ENCODE measurements at regions of chr14 and their contacts with region 1.

Region 1: GRCh38 chr14:95113476-95113875 is 43.9 kb downstream of the DICER1 start:
- DNase-seq: no peak
- H3K4me3 ChIP-seq: no peak overlapping the region
- H3K27ac ChIP-seq: no peak overlapping the region
- H3K4me1 ChIP-seq: peaks cover 0 to under 1% of the 10 kb centered on the region in 2 donors
- H3K27me3 ChIP-seq: no peaks in the 10 kb centered on the region
- CTCF ChIP-seq: no peak
- POLR2A ChIP-seq: no peak

Region 2: GRCh38 chr14:94998670-94999072 is 114.8 kb before region 1 on chr14:
- intact Hi-C with region 1: no loop called
- DNase-seq: peak in 2 of 7 donors; percentile 19 to 26
- H3K4me3 ChIP-seq: no peak overlapping the region
- H3K27ac ChIP-seq: no peak overlapping the region
- H3K4me1 ChIP-seq: no peaks in the 10 kb centered on the region
- H3K27me3 ChIP-seq: no peaks in the 10 kb centered on the region
- CTCF ChIP-seq: no peak
- POLR2A ChIP-seq: no peak

Region 3: DNA sequence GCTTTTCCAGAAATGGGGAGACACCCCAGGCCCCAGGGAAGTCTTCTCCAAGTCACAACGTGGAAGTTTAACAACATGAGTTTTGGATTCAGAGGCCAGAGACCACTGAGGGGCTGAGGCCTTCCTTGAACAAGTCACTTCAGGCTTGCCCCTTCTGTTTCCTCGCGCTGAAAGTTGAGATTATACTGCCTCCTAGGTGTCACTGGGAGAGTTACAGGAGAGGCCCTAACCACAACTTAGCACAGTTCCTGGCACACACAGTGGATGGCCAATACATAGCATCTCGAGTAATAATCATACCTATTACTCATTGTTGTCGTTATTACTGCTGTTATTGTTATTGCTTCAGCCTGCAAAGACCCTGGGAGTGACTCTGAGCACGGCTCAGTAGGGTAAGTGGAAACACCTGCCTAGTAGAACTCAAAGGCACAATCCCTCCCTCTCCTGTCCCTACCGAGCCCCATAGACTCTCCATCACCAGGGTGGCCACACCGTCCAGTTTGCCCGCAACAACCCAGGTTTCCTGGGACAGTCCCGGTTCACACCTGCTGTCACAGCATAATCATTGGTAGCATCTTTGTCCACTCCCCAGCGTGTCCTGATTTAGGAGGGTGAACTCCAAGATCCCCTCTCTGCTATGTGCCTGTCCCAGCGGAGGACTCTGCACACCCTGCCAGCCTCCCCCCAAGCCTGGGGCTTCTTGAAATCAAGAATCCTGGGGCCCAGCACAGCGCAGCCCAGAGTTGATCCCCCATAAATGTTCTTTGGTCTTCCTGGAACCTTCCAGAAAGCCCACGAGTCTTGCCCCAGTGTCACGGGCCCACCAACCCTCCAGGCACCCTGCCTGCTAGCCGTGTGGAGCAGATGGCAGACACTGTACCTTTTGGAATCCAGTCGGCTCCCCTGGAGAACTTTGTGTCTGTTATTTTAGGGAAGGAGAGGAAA is 318.0 kb after region 1 on chr14:
- intact Hi-C with region 1: loop called in 1 of 2 experiments (anchors 5 kb)
- DNase-seq: no peak
- H3K4me3 ChIP-seq: no peak overlapping the region
- H3K27ac ChIP-seq: no peak overlapping the region
- H3K4me1 ChIP-seq: peaks cover 0 to 6% of the 10 kb centered on the region in 2 donors
- H3K27me3 ChIP-seq: no peaks in the 10 kb centered on the region
- CTCF ChIP-seq: peak in 3 of 6 experiments; percentile 42 to 43 (median 43)
- POLR2A ChIP-seq: no peak

Region 4: DNA sequence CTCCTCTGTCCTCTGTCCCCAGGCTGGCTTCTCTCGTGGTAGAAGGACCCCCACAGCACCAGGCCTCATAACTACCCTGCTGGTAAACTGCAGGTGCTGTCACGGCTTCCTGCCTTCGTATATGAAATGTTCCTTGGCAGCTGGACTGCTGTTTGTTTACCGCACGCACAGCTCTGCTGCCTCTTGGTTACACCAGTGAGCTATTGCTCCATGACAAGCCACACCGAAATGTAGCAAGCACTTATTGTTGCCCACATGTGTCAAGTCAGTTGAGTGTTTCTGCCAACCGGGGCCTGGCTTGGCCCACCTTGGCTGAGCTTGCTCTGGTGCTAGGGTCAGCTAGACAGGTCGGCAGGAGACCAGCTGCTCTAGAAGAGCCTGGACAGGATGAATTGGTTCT is 551.1 kb after region 1 on chr14:
- intact Hi-C with region 1: no loop called
- DNase-seq: no peak
- H3K4me3 ChIP-seq: no peak overlapping the region
- H3K27ac ChIP-seq: no peak overlapping the region
- H3K4me1 ChIP-seq: peaks cover 0 to 14% of the 10 kb centered on the region in 2 donors
- H3K27me3 ChIP-seq: no peaks in the 10 kb centered on the region
- CTCF ChIP-seq: no peak
- POLR2A ChIP-seq: no peak

Measured in adrenal gland (tissue), 19 donors.